Activated CD8-positive, alpha-beta memory T cell treated with anti-CD3 and anti-CD28 coated beads, Interleukin-2, amount 10 ng/mL, durations not matched to agents 7 days and 5 days (primary cell): ENCODE measurements at regions of chr6 and their contacts with region 1.

Region 1: DNA sequence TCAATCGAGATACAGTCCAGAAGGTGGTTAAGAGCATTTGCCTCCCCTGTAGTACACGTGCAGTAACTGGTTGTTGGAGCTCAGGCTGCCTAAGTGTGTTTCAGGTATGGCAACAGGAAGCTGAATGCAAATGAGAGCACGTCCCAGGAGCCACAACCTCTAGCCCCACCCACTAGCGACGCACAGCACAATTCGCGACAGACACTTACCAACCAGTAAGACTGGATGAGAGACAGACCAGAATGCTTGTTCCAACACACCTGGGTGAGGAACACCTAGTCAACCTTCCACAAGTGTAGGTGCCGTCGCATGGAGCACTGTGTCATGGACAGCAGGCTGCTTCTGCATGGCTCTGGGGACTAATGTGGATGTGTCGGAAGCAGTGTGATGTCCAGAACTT is 7.2 kb upstream of the SERPINB1 start:
- DNase-seq: peak; percentile 82
- ATAC-seq: peak; percentile 54
- H3K4me3 Mint-ChIP-seq: peak overlapping the region; percentile 3
- H3K27ac Mint-ChIP-seq: peak overlapping the region; percentile 17
- H3K4me1 Mint-ChIP-seq: peaks cover 54% of the 10 kb centered on the region
- H3K27me3 Mint-ChIP-seq: no peaks in the 10 kb centered on the region

Region 2: DNA sequence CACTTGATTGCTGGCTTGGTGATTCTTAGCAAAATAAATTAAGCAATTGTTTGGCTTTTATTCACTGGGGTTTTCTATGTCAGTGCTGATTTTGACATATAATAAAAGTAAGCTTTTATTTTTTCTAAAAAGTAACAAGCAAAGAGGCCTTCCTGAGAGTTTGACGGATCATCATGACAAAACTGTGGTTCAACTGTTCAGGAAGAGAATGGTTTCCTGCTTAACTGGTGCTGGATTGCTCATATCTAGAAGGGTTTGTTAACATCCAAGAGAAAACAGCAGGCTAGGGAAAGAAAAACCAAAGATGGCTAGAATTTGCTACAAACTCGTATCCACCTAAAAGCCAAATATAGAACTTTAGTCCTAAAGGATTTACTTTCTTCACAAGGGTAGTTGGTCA is 28.4 kb before region 1 on chr6:
- CTCF ChIA-PET with region 1: no interaction called
- DNase-seq: no peak
- ATAC-seq: no peak
- H3K4me3 Mint-ChIP-seq: no peak overlapping the region
- H3K27ac Mint-ChIP-seq: no peak overlapping the region
- H3K4me1 Mint-ChIP-seq: peaks cover 25% of the 10 kb centered on the region
- H3K27me3 Mint-ChIP-seq: no peaks in the 10 kb centered on the region

Region 3: DNA sequence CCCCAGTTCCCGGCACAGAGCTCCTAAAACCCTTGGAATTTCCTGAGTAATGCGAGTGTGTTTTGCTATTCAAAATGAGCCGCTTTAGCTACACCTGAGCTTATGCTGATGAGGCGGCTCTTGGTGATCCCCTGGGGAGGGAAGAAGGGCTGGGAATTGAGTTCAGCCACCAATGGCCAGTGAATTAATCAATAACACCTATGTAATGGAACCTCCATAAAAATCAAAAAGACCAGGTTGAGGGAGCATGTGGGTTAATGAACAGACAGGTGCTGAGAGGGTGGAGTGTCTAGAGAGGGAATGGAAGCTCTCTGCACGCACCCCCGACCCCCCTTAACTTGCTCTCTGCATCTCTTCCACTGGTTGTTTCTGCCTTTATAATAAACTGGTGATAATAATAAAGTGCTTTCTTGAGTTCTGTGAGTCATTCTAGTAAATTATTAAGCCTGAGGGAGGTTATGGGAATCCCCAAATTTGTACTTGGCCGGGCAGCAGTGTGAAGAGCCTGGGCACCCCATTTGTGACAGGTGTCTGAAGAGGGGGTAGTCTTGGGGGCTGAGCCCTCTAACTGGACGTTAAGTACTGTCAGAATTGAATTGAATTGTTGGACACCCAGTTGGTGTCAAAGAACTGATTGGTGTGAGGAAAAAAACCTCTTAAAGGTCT is 17.5 kb after region 1 on chr6:
- CTCF ChIA-PET with region 1: interaction called, 11 read pairs
- DNase-seq: peak; percentile 38
- ATAC-seq: no peak
- H3K4me3 Mint-ChIP-seq: no peak overlapping the region
- H3K27ac Mint-ChIP-seq: no peak overlapping the region
- H3K4me1 Mint-ChIP-seq: peaks cover 64% of the 10 kb centered on the region
- H3K27me3 Mint-ChIP-seq: no peaks in the 10 kb centered on the region

Region 4: GRCh38 chr6:2883673-2884072 is 34.8 kb after region 1 on chr6:
- CTCF ChIA-PET with region 1: interaction called, 13 read pairs
- DNase-seq: no peak
- ATAC-seq: no peak
- H3K4me3 Mint-ChIP-seq: no peak overlapping the region
- H3K27ac Mint-ChIP-seq: no peak overlapping the region
- H3K4me1 Mint-ChIP-seq: peaks cover 42% of the 10 kb centered on the region
- H3K27me3 Mint-ChIP-seq: no peaks in the 10 kb centered on the region

Region 5: GRCh38 chr6:2911171-2911570 is 62.3 kb after region 1 on chr6:
- CTCF ChIA-PET with region 1: interaction called, 96 read pairs
- DNase-seq: no peak
- ATAC-seq: no peak
- H3K4me3 Mint-ChIP-seq: no peak overlapping the region
- H3K27ac Mint-ChIP-seq: no peak overlapping the region
- H3K4me1 Mint-ChIP-seq: peaks cover 24% of the 10 kb centered on the region
- H3K27me3 Mint-ChIP-seq: no peaks in the 10 kb centered on the region

Region 6: GRCh38 chr6:2931970-2932748 is 83.3 kb after region 1 on chr6:
- CTCF ChIA-PET with region 1: interaction called, 115 read pairs
- DNase-seq: peak; percentile 92
- ATAC-seq: peak; percentile 91
- H3K4me3 Mint-ChIP-seq: no peak overlapping the region
- H3K27ac Mint-ChIP-seq: peak overlapping the region; percentile 48
- H3K4me1 Mint-ChIP-seq: peaks cover 20% of the 10 kb centered on the region
- H3K27me3 Mint-ChIP-seq: peaks cover 7% of the 10 kb centered on the region

Region 7: DNA sequence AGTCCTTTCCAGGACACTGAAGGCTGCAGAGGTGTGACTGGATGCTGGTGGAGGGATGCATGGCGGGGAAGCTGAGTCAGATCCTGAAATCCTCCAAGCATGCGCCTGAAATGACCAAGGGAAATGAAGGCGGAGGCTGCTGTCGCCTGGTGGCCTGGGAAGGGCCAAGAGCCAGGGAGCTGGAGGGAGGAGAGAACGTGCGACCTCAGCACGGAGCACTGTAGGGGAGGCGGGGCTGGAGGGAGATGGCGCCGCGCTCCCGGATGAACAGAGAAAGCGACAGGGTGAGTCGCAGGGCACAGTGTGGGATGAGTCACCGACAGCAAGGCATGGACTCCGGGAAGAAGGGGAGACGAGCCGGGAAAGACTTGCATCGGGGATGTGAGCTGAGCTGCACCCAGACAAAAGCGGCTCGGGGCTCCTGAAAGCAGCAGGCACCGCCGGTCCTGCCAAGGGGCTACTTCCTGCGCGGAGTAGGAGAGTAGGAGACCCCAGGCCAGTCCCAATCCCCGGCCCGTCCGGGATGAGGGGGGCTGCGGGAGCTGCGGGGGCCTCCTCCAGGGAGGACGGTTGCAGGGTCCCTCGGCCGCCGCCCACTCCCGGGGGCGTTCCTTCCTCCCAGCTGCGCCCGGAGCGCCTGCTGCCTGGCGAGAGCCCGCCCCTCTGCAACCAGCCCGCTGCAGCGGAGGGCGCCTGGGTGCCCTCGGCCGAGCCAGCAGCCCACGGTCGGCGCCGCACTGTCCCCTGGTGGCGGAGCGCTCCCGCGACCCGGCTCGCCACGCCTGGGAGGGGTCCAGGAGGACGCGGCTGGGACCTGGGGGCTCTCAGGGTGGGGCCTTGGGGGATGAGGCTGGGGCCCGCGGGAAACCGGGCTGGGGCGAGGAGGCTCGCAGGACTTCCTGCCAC is 139.8 kb after region 1 on chr6:
- CTCF ChIA-PET with region 1: interaction called, 49 read pairs
- DNase-seq: peak; percentile 86
- ATAC-seq: peak; percentile 81
- H3K4me3 Mint-ChIP-seq: peak overlapping the region; percentile 95
- H3K27ac Mint-ChIP-seq: peak overlapping the region; percentile 99
- H3K4me1 Mint-ChIP-seq: peaks cover 20% of the 10 kb centered on the region
- H3K27me3 Mint-ChIP-seq: peaks cover 3% of the 10 kb centered on the region